K562 (cell line): ENCODE measurements at regions of chr22 and their contacts with region 1.

Region 1: DNA sequence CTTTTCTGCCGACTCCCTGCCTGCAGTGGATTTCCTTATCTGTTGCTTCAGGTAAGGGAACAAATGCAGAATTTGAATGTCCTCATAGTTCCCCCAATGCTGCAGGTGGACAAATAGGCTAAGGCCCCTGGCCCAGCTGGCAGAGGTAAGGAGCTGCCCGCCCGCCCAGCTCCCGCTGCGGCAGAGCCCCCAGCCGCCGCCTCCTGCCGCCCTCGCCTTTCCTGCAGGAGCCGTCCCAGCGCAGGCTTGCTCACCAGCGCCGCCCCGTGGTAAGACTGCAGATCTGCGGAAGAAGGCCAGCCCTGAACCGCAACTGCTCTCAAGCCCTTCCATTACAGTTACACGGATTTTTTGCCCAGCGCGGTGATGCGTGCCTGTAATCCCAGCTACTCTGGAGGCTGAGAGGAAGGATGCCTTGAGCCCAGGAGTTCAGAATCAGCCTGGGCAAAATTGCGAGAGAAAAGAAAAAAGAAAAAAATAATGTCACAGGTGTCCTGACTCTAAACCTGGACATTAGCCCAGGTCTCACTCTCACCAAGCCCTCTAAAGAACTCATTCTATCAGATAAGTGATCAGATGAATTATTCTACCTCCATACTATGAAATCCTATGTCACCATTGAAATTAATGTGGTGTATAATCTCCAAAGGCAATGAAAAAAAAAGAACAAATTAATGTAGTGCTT is 51.2 kb upstream of the EMID1 start:
- DNase-seq: peak; percentile 69 to 84 (median 76)
- ATAC-seq: peak; percentile 76
- H3K4me3 ChIP-seq: no peak overlapping the region
- H3K27ac ChIP-seq: peak overlapping the region; percentile 94
- H3K4me1 ChIP-seq: peaks cover 14 to 24% of the 10 kb centered on the region in 2 experiments
- H3K27me3 ChIP-seq: no peaks in the 10 kb centered on the region
- CTCF ChIP-seq: peak; percentile 87 to 93 (median 88)
- EP300 ChIP-seq: no peak
- POLR2A ChIP-seq: no peak
- RAD21 ChIP-seq: peak; percentile 71 to 81

Region 2: DNA sequence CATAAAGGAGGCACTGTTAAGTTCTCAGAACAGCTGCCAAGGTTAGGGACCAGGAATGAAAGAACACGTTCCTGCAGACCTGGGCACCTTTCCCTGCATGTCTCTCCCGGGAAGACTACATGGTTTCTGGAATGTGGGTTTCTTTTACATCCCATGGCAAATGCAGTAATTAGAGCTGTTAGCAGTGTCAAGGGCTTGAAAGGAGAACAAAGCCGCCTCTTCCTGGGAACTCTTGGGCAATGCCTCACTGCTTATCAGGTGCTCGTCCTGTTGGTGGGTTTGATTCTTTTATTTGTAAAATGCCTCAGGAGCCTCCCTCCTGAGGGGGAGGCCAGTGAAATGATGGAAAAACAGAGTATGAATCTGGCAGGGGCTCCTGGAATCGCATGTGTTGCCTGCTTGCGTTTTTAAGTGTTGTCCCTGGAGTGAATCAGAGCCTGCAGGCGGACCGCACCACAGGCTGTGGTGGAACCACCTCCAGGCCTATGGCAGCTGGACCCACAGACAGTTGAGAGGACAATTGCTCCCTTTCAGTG is 92.2 kb before region 1 on chr22:
- CTCF ChIA-PET with region 1: no interaction called
- POLR2A ChIA-PET with region 1: interaction called, 3 read pairs
- in situ Hi-C with region 1: no loop called
- intact Hi-C with region 1: loop called (anchors 10 kb)
- DNase-seq: no peak
- ATAC-seq: no peak; the same call in 1 of the 3 replicates
- H3K4me3 ChIP-seq: no peak overlapping the region
- H3K27ac ChIP-seq: no peak overlapping the region
- H3K4me1 ChIP-seq: peaks cover 4 to 7% of the 10 kb centered on the region in 2 experiments; a peak in 3 of 5 replicates
- H3K27me3 ChIP-seq: no peaks in the 10 kb centered on the region; a peak in 1 of 5 replicates
- CTCF ChIP-seq: no peak
- EP300 ChIP-seq: no peak
- POLR2A ChIP-seq: no peak
- RAD21 ChIP-seq: no peak

Region 3: GRCh38 chr22:29435236-29436136 is 281.0 kb after region 1 on chr22:
- CTCF ChIA-PET with region 1: no interaction called
- POLR2A ChIA-PET with region 1: no interaction called
- in situ Hi-C with region 1: no loop called
- intact Hi-C with region 1: no loop called
- DNase-seq: no peak
- ATAC-seq: no peak
- H3K4me3 ChIP-seq: no peak overlapping the region
- H3K27ac ChIP-seq: no peak overlapping the region
- H3K4me1 ChIP-seq: no peaks in the 10 kb centered on the region
- H3K27me3 ChIP-seq: peaks cover 5% of the 10 kb centered on the region in 2 experiments; a peak in 2 of 5 replicates
- CTCF ChIP-seq: no peak
- EP300 ChIP-seq: no peak
- POLR2A ChIP-seq: no peak
- RAD21 ChIP-seq: no peak